RWPE1 (cell line): ENCODE measurements at regions of chr5 and their contacts with region 1.

Region 1: DNA sequence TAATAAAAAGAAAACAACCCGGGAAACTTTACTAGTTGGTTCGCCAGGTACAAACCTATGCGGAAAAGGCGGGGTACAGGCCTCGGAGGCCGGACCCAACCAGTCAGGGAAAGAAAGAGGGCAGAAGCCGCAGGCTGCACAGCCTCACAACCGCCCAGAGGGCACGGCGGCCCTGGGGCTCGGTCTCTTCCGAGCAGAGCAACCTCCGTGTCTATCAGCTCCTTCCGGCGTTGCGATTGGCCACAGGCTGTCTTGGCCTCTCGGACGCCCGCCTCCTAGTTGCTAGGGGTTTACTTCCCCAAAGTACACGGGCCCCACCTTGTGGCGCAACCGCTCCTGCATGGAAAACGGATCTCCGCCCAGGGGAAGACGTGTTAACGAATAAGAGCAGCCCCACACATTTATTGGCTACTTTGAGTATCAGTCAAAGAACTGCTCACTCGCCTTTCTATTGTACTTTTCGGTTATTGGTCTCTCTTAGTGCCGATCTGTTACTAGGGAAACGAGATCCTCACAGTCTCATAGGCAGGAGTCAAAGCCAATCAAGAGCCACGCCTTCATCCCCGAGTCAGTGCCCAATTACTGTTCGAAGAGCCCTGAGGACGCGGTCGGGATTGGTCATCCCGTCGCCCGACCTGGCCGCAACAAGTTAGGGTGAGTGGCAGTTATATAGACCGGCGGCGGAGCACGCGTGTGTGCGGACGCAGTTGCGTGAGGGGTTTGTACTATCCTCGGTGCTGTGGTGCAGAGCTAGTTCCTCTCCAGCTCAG is at the start of gene G3BP1:
- DNase-seq: peak; percentile 100
- H3K27ac ChIP-seq: peak within 1 kb of the TSS; percentile 98
- CTCF ChIP-seq: peak; percentile 86

Region 2: GRCh38 chr5:151659001-151659754 is 112.3 kb before region 1 on chr5:
- CTCF ChIA-PET with region 1: interaction called, 22 read pairs
- POLR2A ChIA-PET with region 1: interaction called, 7 read pairs
- DNase-seq: peak; percentile 88
- H3K27ac ChIP-seq: no peak overlapping the region
- CTCF ChIP-seq: peak; percentile 96

Region 3: DNA sequence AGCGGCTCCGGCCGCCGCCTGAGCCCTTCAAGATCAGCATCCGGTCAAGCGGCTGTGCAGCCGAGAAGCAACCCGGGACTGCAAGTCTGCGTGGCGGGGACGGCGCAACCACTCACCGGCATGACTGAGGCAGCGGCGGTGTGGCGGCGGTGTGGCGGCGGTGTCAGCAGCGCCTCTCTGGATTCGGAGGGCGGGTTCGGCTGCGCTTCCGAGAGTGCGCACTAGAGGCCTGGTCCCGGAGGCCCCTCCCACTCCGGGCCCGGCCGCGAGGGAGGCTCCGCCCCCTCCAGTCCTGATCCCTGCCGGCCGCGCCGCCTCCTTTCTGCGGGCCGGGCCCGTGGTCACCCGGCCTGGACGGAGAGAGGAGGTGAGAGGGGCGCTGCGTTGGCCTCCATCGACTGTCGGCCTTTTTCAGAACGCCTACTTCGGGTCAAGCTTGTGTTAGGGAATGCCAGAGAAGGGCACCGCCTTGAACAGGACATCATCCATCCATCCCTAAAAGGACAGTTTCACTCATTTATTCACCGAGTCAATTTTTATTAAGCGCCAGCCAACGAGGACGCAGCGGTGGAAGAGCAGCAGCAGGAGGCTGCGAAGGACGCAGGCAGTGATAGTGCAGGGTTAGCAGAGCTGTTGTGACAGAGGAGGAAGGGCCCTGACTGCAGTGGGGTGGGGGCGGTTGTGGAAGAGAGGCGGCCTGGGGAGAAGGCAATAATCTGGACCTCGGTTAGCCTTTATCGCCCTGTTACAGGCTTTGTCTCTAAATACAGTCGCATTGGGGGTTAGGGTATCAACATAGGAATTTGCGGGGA is 12.8 kb before region 1 on chr5 and contains the start of gene ATOX1:
- CTCF ChIA-PET with region 1: interaction called, 5 read pairs
- POLR2A ChIA-PET with region 1: interaction called, 16 read pairs
- DNase-seq: peak; percentile 99
- H3K27ac ChIP-seq: peak within 1 kb of the TSS; percentile 71
- CTCF ChIP-seq: no peak

Region 4: GRCh38 chr5:152499814-152500535 is 728.5 kb after region 1 on chr5:
- CTCF ChIA-PET with region 1: no interaction called
- POLR2A ChIA-PET with region 1: interaction called, 11 read pairs
- DNase-seq: no peak
- H3K27ac ChIP-seq: no peak overlapping the region
- CTCF ChIP-seq: no peak